Mammary epithelial cell (primary cell): ENCODE measurements at regions of chr12 and their contacts with region 1.

Region 1: GRCh38 chr12:79935021-79935623 is at the start of gene PPP1R12A:
- DNase-seq: peak; percentile 97
- H3K4me3 ChIP-seq: peak within 1 kb of the TSS; percentile 66 to 89 (median 85)
- H3K27ac ChIP-seq: peak within 1 kb of the TSS; percentile 94
- H3K4me1 ChIP-seq: peaks cover 9% of the 10 kb centered on the region
- H3K27me3 ChIP-seq: no peaks in the 10 kb centered on the region
- CTCF ChIP-seq: peak in 1 of 2 donors; percentile 25
- total RNA-seq, gene PPP1R12A: 83.2 to 101 TPM

Region 2: GRCh38 chr12:79407671-79408622 is 527.2 kb before region 1 on chr12:
- CTCF ChIA-PET with region 1: no interaction called
- dilution Hi-C with region 1: no loop called
- in situ Hi-C with region 1: no loop called
- intact Hi-C with region 1: loop called (anchors 2 kb)
- DNase-seq: peak; percentile 81
- H3K4me3 ChIP-seq: no peak overlapping the region
- H3K27ac ChIP-seq: peak overlapping the region; percentile 20
- H3K4me1 ChIP-seq: peaks cover 38% of the 10 kb centered on the region
- H3K27me3 ChIP-seq: no peaks in the 10 kb centered on the region
- CTCF ChIP-seq: peak; percentile 83 to 90

Region 3: GRCh38 chr12:79420146-79420618 is 514.9 kb before region 1 on chr12:
- CTCF ChIA-PET with region 1: no interaction called
- dilution Hi-C with region 1: no loop called
- in situ Hi-C with region 1: no loop called
- intact Hi-C with region 1: loop called (anchors 5 kb)
- DNase-seq: peak; percentile 76
- H3K4me3 ChIP-seq: no peak overlapping the region
- H3K27ac ChIP-seq: peak overlapping the region; percentile 55
- H3K4me1 ChIP-seq: peaks cover 58% of the 10 kb centered on the region
- H3K27me3 ChIP-seq: no peaks in the 10 kb centered on the region
- CTCF ChIP-seq: peak; percentile 51 to 70

Region 4: GRCh38 chr12:79547735-79548609 is 387.1 kb before region 1 on chr12:
- CTCF ChIA-PET with region 1: interaction called, 7 read pairs
- dilution Hi-C with region 1: no loop called
- in situ Hi-C with region 1: no loop called
- intact Hi-C with region 1: loop called (anchors 2 kb)
- DNase-seq: no peak
- H3K4me3 ChIP-seq: peak overlapping the region in 1 of 3 experiments; percentile 9
- H3K27ac ChIP-seq: peak overlapping the region; percentile 90
- H3K4me1 ChIP-seq: peaks cover 35% of the 10 kb centered on the region
- H3K27me3 ChIP-seq: no peaks in the 10 kb centered on the region
- CTCF ChIP-seq: peak; percentile 55 to 72

Region 5: GRCh38 chr12:79747274-79747673 is 187.8 kb before region 1 on chr12:
- CTCF ChIA-PET with region 1: no interaction called
- dilution Hi-C with region 1: no loop called
- in situ Hi-C with region 1: no loop called
- intact Hi-C with region 1: no loop called
- DNase-seq: no peak
- H3K4me3 ChIP-seq: no peak overlapping the region
- H3K27ac ChIP-seq: no peak overlapping the region
- H3K4me1 ChIP-seq: no peaks in the 10 kb centered on the region
- H3K27me3 ChIP-seq: no peaks in the 10 kb centered on the region
- CTCF ChIP-seq: no peak

Region 6: DNA sequence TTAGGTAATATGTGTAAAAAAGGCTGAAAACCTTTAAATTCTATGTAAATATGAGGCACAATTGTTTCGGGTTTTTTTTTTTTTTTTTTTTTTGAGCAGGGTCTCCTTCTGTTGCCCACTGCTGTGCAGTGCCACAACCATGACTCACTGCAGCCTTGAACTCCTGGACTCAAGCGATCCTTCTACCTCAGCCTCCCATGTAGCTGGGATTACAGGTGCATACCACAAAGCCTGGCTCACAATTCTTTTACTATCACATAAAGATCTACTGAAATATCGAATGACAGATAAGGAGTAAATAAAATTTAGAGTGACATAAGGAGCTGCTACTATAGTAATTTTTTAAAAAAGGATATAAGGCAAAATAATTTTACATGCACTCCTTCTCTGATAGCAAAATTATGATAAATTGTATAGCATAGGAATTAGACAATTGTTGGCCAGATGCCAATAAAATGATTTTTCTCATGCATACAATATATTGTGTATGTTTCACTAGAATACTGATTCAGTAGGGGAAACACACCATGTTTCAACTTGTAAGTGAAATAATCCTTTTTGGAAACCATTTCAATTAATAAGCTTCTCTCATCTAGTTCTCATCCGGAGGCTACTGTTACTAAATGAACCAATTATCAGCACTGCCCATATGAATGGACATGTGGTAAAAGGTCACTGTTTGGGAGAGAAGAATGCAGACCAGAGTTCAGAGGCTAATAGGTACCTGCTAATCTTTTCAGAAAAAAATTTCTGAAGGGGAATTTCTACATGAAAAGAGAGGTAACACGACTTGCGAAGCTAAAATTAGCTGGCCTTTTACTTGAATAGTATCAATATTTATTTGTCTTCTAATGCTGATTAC is 108.6 kb before region 1 on chr12:
- CTCF ChIA-PET with region 1: no interaction called
- dilution Hi-C with region 1: no loop called
- in situ Hi-C with region 1: no loop called
- intact Hi-C with region 1: loop called (anchors 10 kb)
- DNase-seq: no peak
- H3K4me3 ChIP-seq: no peak overlapping the region
- H3K27ac ChIP-seq: no peak overlapping the region
- H3K4me1 ChIP-seq: no peaks in the 10 kb centered on the region
- H3K27me3 ChIP-seq: no peaks in the 10 kb centered on the region
- CTCF ChIP-seq: no peak

Region 7: DNA sequence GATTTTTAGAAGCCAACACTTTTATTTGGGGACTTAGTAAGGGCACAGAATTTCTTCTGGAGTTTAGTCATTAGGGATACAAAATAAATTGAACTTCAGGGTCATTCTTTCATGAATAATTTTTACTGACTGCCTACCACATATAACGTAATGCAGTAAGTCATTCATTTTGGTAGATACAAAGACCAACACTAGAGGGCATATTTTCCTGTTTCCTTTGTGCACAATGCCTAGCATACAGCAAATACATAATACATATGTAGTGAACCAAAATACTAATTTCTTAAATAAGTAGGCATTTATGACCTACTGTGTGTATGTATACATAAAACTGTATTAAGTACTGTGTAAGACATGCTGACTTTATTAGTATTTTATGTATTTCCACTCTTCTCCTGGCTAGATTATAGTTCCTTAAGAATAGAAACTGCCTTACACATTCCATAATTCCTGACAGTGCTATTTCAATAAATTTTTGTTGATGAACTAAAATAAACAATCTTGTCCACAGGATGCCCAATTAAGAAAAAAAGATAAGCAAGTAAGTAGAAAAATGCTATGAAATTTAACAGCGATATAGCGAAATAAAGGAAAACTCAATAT is 48.1 kb before region 1 on chr12:
- CTCF ChIA-PET with region 1: interaction called, 3 read pairs
- dilution Hi-C with region 1: no loop called
- in situ Hi-C with region 1: no loop called
- intact Hi-C with region 1: loop called (anchors 1 kb)
- DNase-seq: peak; percentile 41
- H3K4me3 ChIP-seq: no peak overlapping the region
- H3K27ac ChIP-seq: no peak overlapping the region
- H3K4me1 ChIP-seq: peaks cover 16% of the 10 kb centered on the region
- H3K27me3 ChIP-seq: no peaks in the 10 kb centered on the region
- CTCF ChIP-seq: peak; percentile 63 to 72

Region 8: DNA sequence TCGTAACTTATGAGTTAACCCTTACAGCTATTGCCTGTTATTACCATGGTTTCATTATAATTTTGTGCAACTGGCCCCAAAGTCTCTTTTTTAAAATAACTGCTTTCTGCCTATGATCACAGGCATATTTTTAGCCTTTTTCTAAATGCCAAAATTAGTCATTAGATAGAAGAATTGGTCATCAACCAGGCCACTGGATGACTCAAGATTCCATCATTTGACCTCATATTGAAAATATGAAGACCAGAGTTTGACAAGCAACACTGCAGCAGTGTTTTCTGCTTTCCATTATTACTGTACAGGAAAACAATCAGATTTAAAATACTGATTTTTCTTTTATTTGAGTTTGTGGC is 109.5 kb after region 1 on chr12:
- CTCF ChIA-PET with region 1: no interaction called
- dilution Hi-C with region 1: no loop called
- in situ Hi-C with region 1: no loop called
- intact Hi-C with region 1: loop called (anchors 5 kb)
- DNase-seq: peak; percentile 84
- H3K4me3 ChIP-seq: no peak overlapping the region
- H3K27ac ChIP-seq: peak overlapping the region; percentile 41
- H3K4me1 ChIP-seq: peaks cover 17% of the 10 kb centered on the region
- H3K27me3 ChIP-seq: no peaks in the 10 kb centered on the region
- CTCF ChIP-seq: no peak